ENCODE measurements at regions of chr14 and their contacts with region 1.

Region 1: GRCh38 chr14:77028384-77029231 is at the start of gene IRF2BPL:
- DNase-seq: peak; percentile 98
- H3K4me3 ChIP-seq: peak within 1 kb of the TSS; percentile 72 to 91
- H3K27ac ChIP-seq: peak within 1 kb of the TSS; percentile 94 to 98
- H3K4me1 ChIP-seq: peaks cover 54% of the 10 kb centered on the region
- H3K27me3 ChIP-seq: no peaks in the 10 kb centered on the region
- CTCF ChIP-seq: peak in 1 of 3 experiments; percentile 25
- POLR2A ChIP-seq: peak; percentile 44
- total RNA-seq, gene IRF2BPL: 94.6 to 120 TPM

Region 2: DNA sequence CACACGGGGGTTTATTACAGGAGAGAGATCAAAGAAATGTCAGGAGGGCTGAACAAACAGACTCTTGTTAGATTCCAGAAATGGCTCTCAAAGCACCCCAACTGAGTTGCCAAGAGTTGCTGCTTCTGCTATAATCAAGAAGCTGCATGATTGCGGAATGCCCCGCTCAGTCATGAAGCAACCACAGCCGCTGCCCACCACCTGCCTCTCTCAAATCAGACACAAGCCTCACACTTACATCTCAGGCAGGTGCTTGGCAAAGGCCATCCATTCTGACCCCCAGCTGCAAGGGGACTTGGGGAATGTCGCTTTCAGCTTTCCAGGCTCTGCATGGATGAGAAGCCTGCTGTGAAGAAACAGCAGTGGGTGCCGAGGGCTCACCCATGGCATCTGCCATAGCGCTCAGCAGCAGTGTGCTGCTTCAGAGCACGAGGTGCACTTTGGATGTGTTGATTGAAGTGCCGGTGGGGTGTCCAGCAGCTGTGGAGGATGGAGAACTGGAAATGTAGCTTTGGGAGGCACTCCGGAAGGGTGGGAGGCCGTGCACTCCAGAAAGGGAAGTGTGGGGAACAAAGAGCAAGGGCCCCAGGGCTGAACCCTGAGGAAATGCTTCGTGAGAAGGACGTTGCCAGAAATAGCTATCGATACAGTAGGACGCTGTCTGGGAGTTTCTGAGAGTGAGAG is 164.7 kb before region 1 on chr14:
- intact Hi-C with region 1: no loop called
- DNase-seq: peak; percentile 30
- H3K4me3 ChIP-seq: no peak overlapping the region
- H3K27ac ChIP-seq: no peak overlapping the region
- H3K4me1 ChIP-seq: no peaks in the 10 kb centered on the region
- H3K27me3 ChIP-seq: no peaks in the 10 kb centered on the region
- CTCF ChIP-seq: no peak
- POLR2A ChIP-seq: no peak

Region 3: DNA sequence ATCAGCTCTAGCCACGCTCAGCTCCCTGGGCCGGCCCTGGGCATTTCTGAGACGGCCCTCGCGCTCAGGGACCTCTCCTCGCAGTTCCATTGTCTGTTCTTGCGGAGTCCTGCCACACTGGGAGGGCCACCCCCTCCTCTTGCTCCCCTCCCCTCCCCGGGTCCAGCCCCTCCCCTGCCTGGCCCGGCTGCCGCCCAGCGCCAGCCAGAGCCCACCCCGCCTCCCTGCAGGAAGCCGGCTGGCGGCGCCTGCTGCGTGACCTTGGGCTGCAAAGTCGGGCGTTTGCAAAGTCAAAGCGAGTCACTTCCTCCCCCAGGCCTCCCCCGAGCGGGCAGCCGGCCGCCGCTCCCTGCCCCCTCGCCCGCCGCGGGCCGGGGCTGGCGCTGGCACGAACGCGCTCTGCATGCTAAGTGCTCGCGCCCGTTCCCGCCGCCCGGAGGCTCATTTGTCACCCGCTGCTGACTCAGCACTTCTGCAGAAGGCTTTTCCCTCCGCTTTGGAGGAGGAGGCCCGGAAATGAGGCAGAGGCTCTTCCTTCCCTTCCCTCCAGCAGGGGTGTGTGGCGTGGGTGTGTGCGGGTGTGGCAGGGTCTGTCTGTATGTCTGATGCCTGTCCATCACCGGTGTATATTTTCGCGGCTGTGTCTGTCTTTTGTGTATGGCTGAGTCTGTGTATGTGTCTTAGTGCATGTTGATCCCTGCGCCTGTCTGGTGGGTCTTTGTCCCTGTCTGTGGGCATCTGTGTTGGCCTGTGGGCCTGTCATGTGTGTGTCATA is 72.1 kb before region 1 on chr14:
- intact Hi-C with region 1: no loop called
- DNase-seq: peak; percentile 92
- H3K4me3 ChIP-seq: peak overlapping the region; percentile 52 to 63
- H3K27ac ChIP-seq: peak overlapping the region; percentile 86 to 89
- H3K4me1 ChIP-seq: peaks cover 51% of the 10 kb centered on the region
- H3K27me3 ChIP-seq: no peaks in the 10 kb centered on the region
- CTCF ChIP-seq: no peak
- POLR2A ChIP-seq: no peak

Region 4: DNA sequence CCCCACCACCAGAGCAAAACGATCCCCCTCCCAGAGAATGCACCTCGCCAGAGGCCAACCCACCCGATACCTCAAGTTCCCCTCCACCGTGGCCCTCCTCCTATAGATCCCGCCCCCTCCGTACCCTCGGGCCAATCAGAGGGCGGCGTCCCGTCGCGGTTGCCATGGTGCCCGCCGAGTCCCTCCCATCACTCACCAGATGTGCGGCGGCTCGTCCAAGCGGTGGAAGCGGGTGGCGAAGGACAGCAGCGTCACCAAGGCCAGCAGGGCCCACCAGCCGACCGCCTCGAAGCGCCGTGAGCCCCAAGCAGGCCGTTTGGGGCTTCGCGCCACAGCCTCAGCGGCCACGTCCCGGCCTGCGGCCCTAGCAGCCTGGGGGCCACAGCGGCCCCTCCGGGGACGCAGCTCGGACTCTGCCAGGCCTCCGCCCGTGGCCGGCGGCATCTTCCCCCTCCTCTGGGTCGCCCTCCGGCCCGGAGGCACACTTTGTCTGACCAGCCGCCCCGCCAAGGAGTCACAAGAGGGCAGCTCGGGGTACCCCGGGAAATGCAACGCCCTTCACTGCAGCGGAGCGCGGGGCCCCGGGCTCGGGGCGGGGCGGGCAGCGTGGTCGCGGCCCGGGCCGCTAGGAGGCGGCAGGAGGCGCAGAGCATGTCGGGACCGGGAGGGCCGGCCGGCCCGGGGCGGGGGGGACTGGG is 291.8 kb after region 1 on chr14 and contains the start of gene POMT2:
- intact Hi-C with region 1: loop called (anchors 5 kb)
- DNase-seq: peak; percentile 97
- H3K4me3 ChIP-seq: peak within 1 kb of the TSS; percentile 98 to 99
- H3K27ac ChIP-seq: peak within 1 kb of the TSS; percentile 86 to 98
- H3K4me1 ChIP-seq: peaks cover 44% of the 10 kb centered on the region
- H3K27me3 ChIP-seq: no peaks in the 10 kb centered on the region
- CTCF ChIP-seq: peak; percentile 31 to 46 (median 45)
- POLR2A ChIP-seq: peak; percentile 3
- total RNA-seq, gene POMT2: 127 to 162 TPM

Measured in testis (tissue), 5 donors.